CD8-positive, alpha-beta T cell (primary cell): ENCODE measurements at regions of chr4 and their contacts with region 1.

Region 1: GRCh38 chr4:41913509-41913908 is 21.7 kb upstream of the TMEM33 start:
- DNase-seq: no peak
- ATAC-seq: no peak
- H3K4me3 ChIP-seq: no peak overlapping the region
- H3K4me3 Mint-ChIP-seq: no peak overlapping the region
- H3K27ac ChIP-seq: no peak overlapping the region
- H3K27ac Mint-ChIP-seq: no peak overlapping the region
- H3K4me1 ChIP-seq: no peaks in the 10 kb centered on the region
- H3K4me1 Mint-ChIP-seq: no peaks in the 10 kb centered on the region
- H3K27me3 ChIP-seq: no peaks in the 10 kb centered on the region
- H3K27me3 Mint-ChIP-seq: peaks cover 8% of the 10 kb centered on the region
- CTCF ChIP-seq: no peak

Region 2: DNA sequence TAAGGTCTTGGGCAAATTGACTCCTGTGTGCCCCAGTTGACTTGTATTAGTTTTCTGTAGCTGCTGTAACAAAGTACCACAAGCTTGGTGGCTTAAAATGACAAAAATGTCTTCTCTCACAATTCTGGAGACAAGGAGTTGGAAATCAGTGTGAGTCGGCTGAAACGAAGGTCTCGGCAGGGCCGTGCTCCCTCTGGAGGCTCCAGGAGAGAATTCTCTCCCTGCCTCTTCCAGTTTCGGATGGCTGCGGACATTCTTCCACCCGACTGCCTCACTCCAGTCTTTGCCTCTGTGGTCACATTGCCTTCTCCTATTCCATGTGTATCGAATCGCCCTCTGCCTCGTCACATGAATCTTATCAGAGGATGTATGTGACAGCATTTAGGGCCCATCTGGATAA is 98.9 kb before region 1 on chr4:
- CTCF ChIA-PET with region 1: no interaction called
- POLR2A ChIA-PET with region 1: no interaction called
- intact Hi-C with region 1: no loop called
- DNase-seq: no peak
- ATAC-seq: no peak
- H3K4me3 ChIP-seq: no peak overlapping the region
- H3K4me3 Mint-ChIP-seq: no peak overlapping the region
- H3K27ac ChIP-seq: no peak overlapping the region
- H3K27ac Mint-ChIP-seq: no peak overlapping the region
- H3K4me1 ChIP-seq: no peaks in the 10 kb centered on the region
- H3K4me1 Mint-ChIP-seq: no peaks in the 10 kb centered on the region
- H3K27me3 ChIP-seq: no peaks in the 10 kb centered on the region
- H3K27me3 Mint-ChIP-seq: peaks cover 12% of the 10 kb centered on the region
- CTCF ChIP-seq: no peak

Region 3: DNA sequence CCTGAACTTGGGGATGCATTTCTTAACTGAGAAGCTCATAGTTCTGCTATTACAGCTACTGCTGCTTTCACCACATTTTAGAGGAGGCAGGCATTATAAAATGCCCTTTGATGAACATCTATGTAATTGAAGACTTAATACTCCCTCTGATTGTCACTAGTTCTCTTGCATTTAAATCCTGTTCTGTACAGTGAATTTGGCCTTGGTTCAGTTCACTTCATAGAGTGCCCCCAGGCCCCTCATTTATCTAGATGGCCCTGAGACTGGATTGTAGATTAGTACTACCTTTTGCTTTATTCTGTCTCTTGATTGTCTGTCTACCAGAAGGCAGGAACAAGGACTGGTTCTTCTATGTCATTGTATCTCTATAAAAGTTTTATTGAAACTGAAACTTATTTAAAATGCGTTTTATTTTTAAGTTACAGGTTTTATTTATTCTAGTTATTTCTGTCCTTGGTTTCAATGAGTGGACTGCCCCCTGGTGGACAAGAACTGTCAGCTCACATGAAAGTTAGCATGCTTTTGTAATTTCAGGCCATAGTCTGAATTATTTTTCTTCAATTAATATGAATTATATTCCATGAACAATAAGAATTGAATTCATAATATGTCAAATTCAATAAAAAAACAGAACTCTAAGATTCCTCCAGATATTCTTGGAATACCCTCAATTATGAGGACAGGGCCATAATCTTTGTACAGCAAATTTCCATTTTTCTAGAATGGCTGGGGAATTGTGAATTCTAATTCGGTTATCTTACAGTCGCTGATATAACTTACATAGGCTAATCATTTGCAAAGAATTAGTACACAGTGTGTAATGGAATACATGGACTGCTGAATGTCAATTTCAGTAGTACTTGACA is 25.5 kb before region 1 on chr4:
- CTCF ChIA-PET with region 1: interaction called, 13 read pairs
- POLR2A ChIA-PET with region 1: no interaction called
- intact Hi-C with region 1: no loop called
- DNase-seq: peak in 7 of 9 experiments; percentile 17 to 63 (median 47)
- ATAC-seq: no peak
- H3K4me3 ChIP-seq: no peak overlapping the region
- H3K4me3 Mint-ChIP-seq: no peak overlapping the region
- H3K27ac ChIP-seq: no peak overlapping the region
- H3K27ac Mint-ChIP-seq: no peak overlapping the region
- H3K4me1 ChIP-seq: no peaks in the 10 kb centered on the region
- H3K4me1 Mint-ChIP-seq: no peaks in the 10 kb centered on the region
- H3K27me3 ChIP-seq: no peaks in the 10 kb centered on the region
- H3K27me3 Mint-ChIP-seq: peaks cover 28% of the 10 kb centered on the region
- CTCF ChIP-seq: peak; percentile 99